ENCODE measurements at regions of chr4 and their contacts with region 1.

Region 1: GRCh38 chr4:177555007-177555574 is 112.9 kb upstream of the AGA start:
- DNase-seq: peak; percentile 16
- H3K4me3 ChIP-seq: no peak overlapping the region
- H3K27ac ChIP-seq: no peak overlapping the region
- H3K4me1 ChIP-seq: no peaks in the 10 kb centered on the region
- H3K27me3 ChIP-seq: no peaks in the 10 kb centered on the region
- CTCF ChIP-seq: peak; percentile 39 to 57 (median 45)
- EP300 ChIP-seq: no peak
- POLR2A ChIP-seq: no peak

Region 2: DNA sequence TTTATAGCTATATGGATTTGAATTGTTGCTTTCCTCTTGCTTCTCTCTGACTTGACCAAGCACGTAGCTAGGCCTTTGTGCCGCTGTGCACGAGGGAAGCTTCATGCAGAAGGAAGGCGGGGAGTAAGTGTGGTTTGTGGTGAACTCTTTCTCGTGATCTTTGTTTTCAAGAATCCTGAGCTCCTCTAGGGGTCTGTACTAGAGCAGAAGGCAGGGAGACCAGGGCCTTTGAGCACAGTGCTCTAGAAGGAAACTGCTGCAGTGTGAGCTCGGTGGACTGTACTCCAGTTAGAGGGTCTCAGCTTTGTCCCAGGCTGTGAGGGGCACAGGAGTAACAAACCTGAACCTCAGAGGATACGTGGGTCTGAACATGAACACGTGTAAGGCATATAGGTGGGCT is 161.9 kb before region 1 on chr4:
- in situ Hi-C with region 1: no loop called
- intact Hi-C with region 1: no loop called
- DNase-seq: peak; percentile 26
- H3K4me3 ChIP-seq: no peak overlapping the region
- H3K27ac ChIP-seq: no peak overlapping the region
- H3K4me1 ChIP-seq: no peaks in the 10 kb centered on the region
- H3K27me3 ChIP-seq: no peaks in the 10 kb centered on the region
- CTCF ChIP-seq: no peak
- EP300 ChIP-seq: no peak
- POLR2A ChIP-seq: no peak

Region 3: DNA sequence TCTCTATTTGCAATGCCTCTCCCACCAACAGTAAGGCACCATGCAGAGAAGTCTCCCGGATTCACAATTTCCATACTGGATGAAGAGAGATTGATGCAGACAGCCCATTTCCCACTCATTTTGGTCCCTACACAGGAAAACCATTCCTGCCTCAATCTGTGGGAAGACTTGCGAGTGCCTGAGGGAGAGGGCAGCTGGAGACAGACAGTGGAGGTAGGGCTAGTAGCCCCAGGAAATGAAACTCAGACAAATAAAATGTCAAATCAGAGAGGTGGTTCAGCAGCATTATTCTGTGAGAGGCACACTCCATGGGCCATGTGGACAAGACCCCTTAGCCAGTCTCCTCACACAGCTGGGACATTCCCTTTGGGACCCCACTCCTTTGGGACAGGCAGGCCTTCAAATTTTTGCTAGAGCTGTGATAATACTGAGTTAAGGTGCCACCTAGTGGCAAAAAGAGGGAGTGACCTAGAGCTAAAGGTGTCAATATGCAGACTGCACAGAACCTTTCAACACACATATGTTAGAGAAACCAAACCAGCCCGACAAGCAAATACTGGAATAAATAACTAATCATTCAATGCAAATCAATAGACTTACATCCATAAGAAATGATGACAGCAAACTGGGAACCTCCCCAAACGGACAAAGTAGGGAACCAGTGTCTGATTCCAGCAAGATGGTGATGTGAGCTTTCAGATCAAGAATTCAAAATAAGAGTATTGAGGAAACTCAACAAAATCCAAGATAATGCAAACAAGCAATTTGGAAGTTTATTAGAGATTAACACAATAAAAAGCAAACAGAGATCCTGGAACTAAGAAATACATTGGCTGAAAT is 1752.4 kb after region 1 on chr4:
- in situ Hi-C with region 1: loop called in 2 of 4 experiments (anchors 25 kb)
- intact Hi-C with region 1: no loop called
- DNase-seq: peak; percentile 16
- H3K4me3 ChIP-seq: no peak overlapping the region
- H3K27ac ChIP-seq: no peak overlapping the region
- H3K4me1 ChIP-seq: no peaks in the 10 kb centered on the region
- H3K27me3 ChIP-seq: no peaks in the 10 kb centered on the region
- CTCF ChIP-seq: peak; percentile 41 to 65 (median 48)
- EP300 ChIP-seq: no peak
- POLR2A ChIP-seq: no peak

Measured in transverse colon (tissue), 4 donors.